ENCODE measurements at regions of chr9 and their contacts with region 1.

Region 1: DNA sequence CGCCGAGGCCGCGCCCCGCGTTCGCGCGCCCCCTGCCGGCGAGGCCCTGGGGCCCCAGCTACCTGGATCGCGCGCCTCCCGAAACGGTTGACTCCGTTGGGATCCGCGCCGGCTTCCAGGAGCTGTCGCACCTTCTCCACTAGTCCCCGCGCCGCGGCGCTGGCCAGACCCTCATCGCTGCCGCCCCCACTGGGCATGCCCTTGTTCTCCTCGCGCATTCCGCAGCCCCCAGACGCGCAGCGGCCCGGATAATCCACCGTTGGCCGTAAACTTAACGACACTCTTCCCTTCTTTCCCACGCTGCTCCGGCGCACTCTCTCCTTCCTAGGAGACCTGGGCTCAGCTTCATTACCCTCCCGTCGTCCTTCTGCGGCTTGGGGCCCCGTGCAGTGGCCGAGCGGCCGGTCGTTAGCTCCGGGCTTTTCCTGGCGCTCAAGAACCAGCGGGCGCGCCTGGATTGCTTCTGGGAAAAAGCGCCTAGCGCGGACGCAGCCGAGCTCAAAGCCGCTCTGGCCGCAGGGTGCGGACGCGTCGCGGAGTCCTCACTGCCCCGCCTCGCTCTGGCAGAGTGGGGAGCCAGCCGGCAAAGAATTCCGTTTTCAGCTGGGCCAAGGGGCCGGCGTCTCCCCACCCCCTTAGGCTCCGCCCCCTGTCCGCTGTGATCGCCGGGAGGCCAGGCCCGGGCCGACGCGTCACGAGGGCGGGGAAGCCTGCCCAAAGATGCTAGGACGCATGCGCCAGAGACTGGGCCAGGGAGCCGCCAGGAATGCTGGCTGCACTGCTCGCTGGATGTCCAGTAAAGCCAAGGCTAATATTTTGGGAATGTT is at the start of gene CDKN2B:
- DNase-seq: peak in 25 of 35 experiments; percentile 23 to 80 (median 45)
- ATAC-seq: peak; percentile 70 to 80 (median 73)
- H3K4me3 ChIP-seq: peak within 1 kb of the TSS; percentile 61 to 77
- H3K4me3 Mint-ChIP-seq: peak within 1 kb of the TSS; percentile 68 to 85 (median 81)
- H3K27ac ChIP-seq: no peak within 1 kb of the TSS
- H3K27ac Mint-ChIP-seq: peak within 1 kb of the TSS in 1 of 2 donors; percentile 46
- H3K4me1 ChIP-seq: peaks cover 9 to 24% of the 10 kb centered on the region in 2 experiments
- H3K4me1 Mint-ChIP-seq: peaks cover 22 to 34% (median 26%) of the 10 kb centered on the region in 3 donors
- H3K27me3 ChIP-seq: peaks cover 30 to 39% of the 10 kb centered on the region in 2 experiments
- H3K27me3 Mint-ChIP-seq: peaks cover 57 to 58% of the 10 kb centered on the region in 2 donors
- total RNA-seq, gene CDKN2B: 0.33 to 4.4 (median 1.4) TPM

Region 2: DNA sequence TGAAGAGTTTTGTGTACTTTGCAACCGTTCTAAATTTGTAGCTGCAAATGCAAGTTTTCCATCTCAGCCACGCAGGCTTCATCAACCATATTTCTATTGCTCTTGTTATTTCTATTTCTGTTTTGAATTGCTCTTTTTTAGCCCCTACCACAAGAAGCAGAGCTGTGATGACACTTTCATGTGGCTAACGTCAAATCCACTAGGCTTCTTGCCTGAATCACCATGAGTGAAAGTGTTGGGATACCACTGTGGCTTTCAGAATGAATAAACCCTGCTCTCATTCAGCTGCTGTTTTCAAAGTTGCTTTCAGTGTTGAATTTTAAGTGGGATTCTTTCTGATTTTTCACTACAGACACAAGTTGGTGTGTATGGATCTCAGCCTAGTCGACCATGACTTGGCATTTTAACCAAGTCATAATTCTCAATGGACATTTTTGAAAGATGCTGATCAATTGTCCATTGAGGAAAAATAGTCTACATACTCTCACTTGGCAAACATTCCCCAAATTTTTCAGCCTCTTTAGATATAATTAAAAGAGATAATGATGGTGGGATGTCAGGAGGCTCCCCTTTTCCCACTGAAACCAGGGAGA is 247.5 kb before region 1 on chr9:
- CTCF ChIA-PET with region 1: no interaction called
- POLR2A ChIA-PET with region 1: no interaction called
- DNase-seq: no peak
- ATAC-seq: no peak
- H3K4me3 ChIP-seq: no peak overlapping the region
- H3K4me3 Mint-ChIP-seq: no peak overlapping the region
- H3K27ac ChIP-seq: no peak overlapping the region
- H3K27ac Mint-ChIP-seq: no peak overlapping the region
- H3K4me1 ChIP-seq: no peaks in the 10 kb centered on the region
- H3K4me1 Mint-ChIP-seq: peaks cover 0 to 3% (median 0%) of the 10 kb centered on the region in 3 donors
- H3K27me3 ChIP-seq: peaks cover 2 to 4% of the 10 kb centered on the region in 2 experiments
- H3K27me3 Mint-ChIP-seq: peaks cover 16 to 17% of the 10 kb centered on the region in 2 donors

Region 3: DNA sequence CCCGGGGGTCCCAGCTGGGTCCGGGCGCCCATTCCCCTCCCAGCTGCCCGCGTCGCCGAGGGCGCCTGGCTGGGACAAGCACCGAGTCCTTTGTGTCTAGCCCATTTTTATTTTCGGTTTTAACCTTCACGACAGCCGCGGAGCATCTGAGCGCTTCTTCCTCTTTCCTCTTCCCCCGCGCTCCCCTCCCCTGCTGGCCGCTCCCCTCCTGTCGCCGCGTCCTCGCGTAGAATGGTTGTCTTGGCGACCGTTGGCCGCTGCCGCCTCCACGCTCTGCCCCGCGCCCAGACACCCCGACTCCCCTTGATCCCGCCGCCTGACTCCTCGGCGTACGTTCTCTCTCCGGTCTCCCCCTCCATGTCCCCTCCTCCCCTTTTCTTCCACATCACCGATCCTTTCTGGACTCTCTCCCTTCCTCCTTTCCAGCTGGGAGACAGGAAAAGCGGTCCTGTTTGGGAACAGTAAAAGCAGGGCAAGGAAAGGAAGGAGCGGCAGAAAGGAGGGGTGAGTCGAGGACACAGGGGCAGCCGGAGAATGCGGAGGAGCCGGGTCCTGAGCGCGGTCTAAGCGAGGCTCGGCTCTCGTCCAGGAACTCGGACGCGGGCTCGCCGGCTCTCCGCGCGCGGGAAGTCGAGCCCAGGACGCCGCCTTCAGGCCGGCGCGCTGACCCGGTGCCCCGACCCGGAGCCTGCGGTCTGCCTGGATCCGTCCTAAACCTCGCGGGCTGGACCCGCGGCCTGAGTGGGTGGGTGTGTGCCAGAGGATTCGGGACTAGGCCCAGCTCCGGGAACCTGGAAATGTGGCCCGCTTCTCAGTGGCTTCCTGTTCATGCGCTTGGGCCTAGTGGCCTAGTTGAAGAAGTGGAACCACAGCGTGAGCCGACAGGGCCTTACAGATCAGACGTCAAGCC is 13.5 kb before region 1 on chr9:
- CTCF ChIA-PET with region 1: interaction called, 6 to 24 read pairs
- POLR2A ChIA-PET with region 1: no interaction called
- DNase-seq: peak; percentile 36 to 88 (median 69)
- ATAC-seq: peak; percentile 73 to 81 (median 76)
- H3K4me3 ChIP-seq: peak overlapping the region; percentile 90 to 99
- H3K4me3 Mint-ChIP-seq: peak overlapping the region; percentile 91 to 96 (median 93)
- H3K27ac ChIP-seq: peak overlapping the region; percentile 84
- H3K27ac Mint-ChIP-seq: peak overlapping the region; percentile 86 to 94
- H3K4me1 ChIP-seq: peaks cover 2 to 20% of the 10 kb centered on the region in 2 experiments
- H3K4me1 Mint-ChIP-seq: peaks cover 16 to 17% (median 16%) of the 10 kb centered on the region in 3 donors
- H3K27me3 ChIP-seq: peaks cover 8 to 19% of the 10 kb centered on the region in 2 experiments
- H3K27me3 Mint-ChIP-seq: peaks cover under 1 to 3% of the 10 kb centered on the region in 2 donors

Region 4: DNA sequence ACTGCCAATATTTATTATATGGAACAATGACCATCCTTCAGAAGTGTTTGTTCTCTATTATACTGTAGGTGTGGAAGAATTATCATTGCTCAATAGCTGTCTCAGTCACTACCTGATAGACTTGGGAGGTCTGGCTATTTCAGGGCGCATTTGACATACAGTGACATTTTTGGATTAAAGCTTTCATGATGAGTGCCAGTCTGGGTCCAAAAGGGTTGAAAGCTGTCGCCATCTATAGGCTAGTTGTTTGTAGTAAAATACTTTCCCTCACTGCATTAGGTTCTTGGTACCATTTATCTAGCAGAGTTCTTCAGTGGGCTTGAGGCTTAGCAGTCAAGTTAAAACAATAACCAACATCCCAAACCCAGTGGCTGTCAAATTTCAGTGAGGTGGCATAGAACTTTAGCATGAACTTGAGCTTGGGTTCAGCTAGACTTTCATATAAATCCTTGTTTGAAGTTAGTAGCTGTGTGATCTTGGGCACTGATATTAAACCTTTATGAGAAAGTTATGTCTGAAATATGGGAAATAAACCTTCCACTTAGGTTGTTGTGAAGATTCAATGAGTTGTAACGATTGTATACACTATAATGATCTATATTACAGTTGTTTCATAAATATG is 110.7 kb after region 1 on chr9:
- CTCF ChIA-PET with region 1: interaction called, 3 to 10 read pairs
- POLR2A ChIA-PET with region 1: no interaction called
- DNase-seq: peak in 4 of 35 experiments; percentile 1 to 39 (median 2)
- ATAC-seq: peak in 3 of 4 experiments; percentile 52 to 74 (median 56)
- H3K4me3 ChIP-seq: no peak overlapping the region
- H3K4me3 Mint-ChIP-seq: no peak overlapping the region
- H3K27ac ChIP-seq: no peak overlapping the region
- H3K27ac Mint-ChIP-seq: no peak overlapping the region
- H3K4me1 ChIP-seq: no peaks in the 10 kb centered on the region
- H3K4me1 Mint-ChIP-seq: peaks cover 0 to 21% (median 14%) of the 10 kb centered on the region in 3 donors
- H3K27me3 ChIP-seq: peaks cover 0 to 2% of the 10 kb centered on the region in 2 experiments
- H3K27me3 Mint-ChIP-seq: peaks cover 5 to 6% of the 10 kb centered on the region in 2 donors

Measured in T-cell (primary cell).